ENCODE measurements at regions of chr11 and their contacts with region 1.

Region 1: DNA sequence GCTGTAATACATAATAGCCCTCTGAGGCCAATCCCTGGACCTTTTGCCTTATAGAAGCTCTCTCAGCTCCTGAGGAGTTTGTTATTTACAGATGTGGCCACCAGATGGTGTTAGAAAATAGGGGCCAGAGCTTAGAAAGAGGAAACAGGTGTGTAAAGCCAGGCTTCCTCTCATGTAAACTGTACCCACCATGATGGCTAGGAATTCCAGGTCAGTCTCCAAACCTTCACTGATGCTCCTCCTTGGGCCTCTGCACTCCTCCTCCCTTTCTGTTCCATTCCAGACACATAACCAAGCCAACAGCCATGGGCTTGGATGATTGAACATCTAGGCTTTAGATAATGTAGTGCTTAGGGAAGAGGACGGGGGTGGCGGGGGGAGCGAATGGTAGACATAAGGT is 39.7 kb downstream of the USP35 start:
- DNase-seq: peak in 1 of 10 donors; percentile 32
- H3K4me3 ChIP-seq: no peak overlapping the region
- H3K27ac ChIP-seq: peak overlapping the region in 55 of 59 donors; percentile 11 to 80 (median 56)
- H3K27me3 ChIP-seq: no peaks in the 10 kb centered on the region
- CTCF ChIP-seq: peak in 55 of 56 donors; percentile 49 to 86 (median 67)

Region 2: DNA sequence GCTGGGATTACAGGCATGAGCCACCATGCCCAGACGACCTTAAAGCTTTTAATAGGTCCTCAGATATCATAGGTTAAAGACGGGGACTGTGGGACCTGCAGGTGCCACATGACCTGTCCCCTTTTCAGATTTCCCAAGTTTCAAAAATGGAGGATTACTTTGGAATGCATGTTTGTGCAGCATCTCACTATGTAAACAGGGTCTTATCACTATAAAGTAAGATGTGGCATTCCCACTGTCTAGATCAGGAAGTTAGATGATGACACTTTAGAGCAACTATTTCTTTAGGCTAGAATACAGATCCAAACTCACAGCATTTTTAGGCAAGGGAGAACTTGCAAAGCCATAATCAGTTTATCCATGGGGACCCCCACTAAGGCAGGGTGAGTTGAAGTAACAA is 53.0 kb after region 1 on chr11:
- intact Hi-C with region 1: no loop called
- DNase-seq: no peak
- H3K4me3 ChIP-seq: no peak overlapping the region
- H3K27ac ChIP-seq: peak overlapping the region in 2 of 59 donors; percentile 1
- H3K27me3 ChIP-seq: no peaks in the 10 kb centered on the region
- CTCF ChIP-seq: no peak

Region 3: GRCh38 chr11:78310500-78310909 is 82.0 kb after region 1 on chr11:
- intact Hi-C with region 1: loop called (anchors 5 to 10 kb)
- DNase-seq: no peak
- H3K4me3 ChIP-seq: peak overlapping the region in 8 of 59 donors; percentile 11 to 44 (median 18)
- H3K27ac ChIP-seq: peak overlapping the region in 53 of 59 donors; percentile 4 to 99 (median 77)
- H3K27me3 ChIP-seq: no peaks in the 10 kb centered on the region
- CTCF ChIP-seq: no peak

Region 4: GRCh38 chr11:78318321-78319114 is 90.1 kb after region 1 on chr11:
- intact Hi-C with region 1: loop called (anchors 5 to 10 kb)
- DNase-seq: peak; percentile 5 to 84 (median 75)
- H3K4me3 ChIP-seq: peak overlapping the region in 29 of 59 donors; percentile 3 to 40 (median 17)
- H3K27ac ChIP-seq: peak overlapping the region in 58 of 59 donors; percentile 66 to 99 (median 93)
- H3K27me3 ChIP-seq: no peaks in the 10 kb centered on the region
- CTCF ChIP-seq: peak in 14 of 56 donors; percentile 11 to 44 (median 24)

Region 5: DNA sequence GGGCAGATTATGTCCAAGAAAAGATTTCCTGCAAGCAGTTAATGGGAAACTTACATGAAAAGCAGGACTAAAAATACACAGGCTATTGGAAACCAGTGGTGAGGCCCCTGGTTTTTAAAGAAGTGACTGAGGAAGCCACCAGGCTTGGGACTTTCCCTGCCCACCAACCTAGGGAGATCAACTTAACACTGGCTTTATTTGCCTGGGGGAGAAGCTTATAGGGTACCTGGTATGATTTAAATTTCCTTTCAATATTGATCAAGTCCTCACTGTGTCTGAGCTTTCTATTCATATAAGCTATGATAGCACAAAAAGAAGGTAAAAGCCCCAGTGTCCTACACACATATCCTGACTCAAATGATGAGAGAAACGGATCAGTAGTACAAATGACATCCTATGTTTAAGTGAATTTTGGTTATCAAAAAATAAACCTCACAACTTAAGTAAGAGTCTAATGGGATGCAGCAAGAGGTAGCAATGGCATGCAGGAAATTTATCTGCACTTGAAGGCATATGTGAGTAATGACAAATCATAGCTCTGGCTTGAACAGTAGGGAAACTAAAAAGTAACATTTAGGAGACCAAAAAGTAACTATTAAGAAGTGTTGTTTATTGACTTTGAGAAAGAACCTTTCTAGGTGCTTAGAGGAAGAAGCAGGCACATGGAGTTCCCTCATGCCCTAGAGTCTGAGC is 103.9 kb after region 1 on chr11:
- intact Hi-C with region 1: loop called in 1 of 2 experiments (anchors 5 kb)
- DNase-seq: no peak
- H3K4me3 ChIP-seq: peak overlapping the region in 7 of 59 donors; percentile 1 to 31 (median 13)
- H3K27ac ChIP-seq: peak overlapping the region in 58 of 59 donors; percentile 43 to 99 (median 89)
- H3K27me3 ChIP-seq: no peaks in the 10 kb centered on the region
- CTCF ChIP-seq: peak in 3 of 56 donors; percentile 1 to 8 (median 1)

Region 6: GRCh38 chr11:78465169-78465942 is 236.9 kb after region 1 on chr11:
- intact Hi-C with region 1: no loop called
- DNase-seq: no peak
- H3K4me3 ChIP-seq: no peak overlapping the region
- H3K27ac ChIP-seq: no peak overlapping the region
- H3K27me3 ChIP-seq: no peaks in the 10 kb centered on the region
- CTCF ChIP-seq: no peak

Region 7: DNA sequence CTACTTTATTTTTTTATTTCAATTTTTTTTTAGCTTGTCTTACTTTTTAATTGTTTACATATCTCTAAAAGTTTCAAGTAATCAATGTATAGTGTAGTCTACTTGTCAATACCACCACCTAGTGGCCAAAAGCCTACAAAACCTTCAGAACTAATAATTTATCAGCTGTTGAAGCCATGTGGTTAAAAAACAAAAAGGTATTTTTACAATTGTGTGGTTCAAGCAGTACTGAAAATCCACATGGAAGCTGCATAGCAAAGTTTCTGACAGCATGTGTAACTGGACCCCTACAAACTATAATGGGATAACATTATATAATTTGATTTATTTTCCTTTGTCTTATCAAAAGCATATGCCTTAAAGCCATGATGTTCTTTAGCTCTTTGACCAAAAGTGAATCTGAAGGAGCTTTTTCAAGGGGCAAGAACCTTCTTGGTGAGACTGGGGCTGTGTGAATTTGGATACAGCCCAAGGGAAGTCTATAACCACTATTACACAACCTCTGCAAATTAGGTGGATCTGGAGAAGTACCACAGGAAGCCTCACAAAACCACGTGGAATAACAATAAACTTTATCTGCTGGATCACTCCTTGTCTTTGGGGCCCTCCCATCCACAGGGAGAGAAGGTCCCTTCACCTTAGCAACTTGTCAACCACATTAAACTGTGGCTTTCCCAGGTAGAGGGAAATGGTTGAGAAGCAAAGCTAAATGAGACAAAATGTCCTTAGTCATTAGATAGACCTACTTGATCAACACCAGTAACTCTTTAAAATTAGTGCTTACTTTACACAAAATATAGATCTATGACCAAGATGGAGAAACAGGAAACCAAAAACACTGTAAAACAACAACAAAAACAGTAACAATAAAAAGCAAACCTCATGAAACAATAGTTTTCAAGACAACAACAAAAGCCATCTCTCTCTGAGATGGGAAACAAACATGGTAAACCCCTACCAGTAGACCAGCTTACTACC is 336.3 kb after region 1 on chr11:
- intact Hi-C with region 1: loop called in 1 of 2 experiments (anchors 10 kb)
- DNase-seq: peak in 1 of 10 donors; percentile 11
- H3K4me3 ChIP-seq: no peak overlapping the region
- H3K27ac ChIP-seq: no peak overlapping the region
- H3K27me3 ChIP-seq: no peaks in the 10 kb centered on the region
- CTCF ChIP-seq: peak; percentile 64 to 87 (median 76)

Measured in dorsolateral prefrontal cortex (tissue), 120 donors.